Heart left ventricle (tissue), 16 donors: ENCODE measurements at regions of chr7 and their contacts with region 1.

Region 1: GRCh38 chr7:99985444-99985843 is 9.6 kb upstream of the AZGP1 start:
- DNase-seq: no peak
- ATAC-seq: no peak
- H3K4me3 ChIP-seq: no peak overlapping the region
- H3K27ac ChIP-seq: no peak overlapping the region
- H3K4me1 ChIP-seq: peaks cover 0 to 2% (median 0%) of the 10 kb centered on the region in 12 donors
- H3K27me3 ChIP-seq: peaks cover 0 to 4% (median 0%) of the 10 kb centered on the region in 9 donors
- CTCF ChIP-seq: no peak
- POLR2A ChIP-seq: no peak

Region 2: GRCh38 chr7:99918959-99919813 is 66.3 kb before region 1 on chr7 and contains the start of gene TRIM4:
- intact Hi-C with region 1: loop called in 3 of 10 experiments (anchors 5 kb)
- DNase-seq: peak; percentile 92 to 95 (median 95)
- ATAC-seq: peak; percentile 99 to 100 (median 99)
- H3K4me3 ChIP-seq: peak within 1 kb of the TSS; percentile 57 to 97 (median 81)
- H3K27ac ChIP-seq: peak within 1 kb of the TSS; percentile 51 to 97 (median 92)
- H3K4me1 ChIP-seq: peaks cover 9 to 42% (median 31%) of the 10 kb centered on the region in 12 donors
- H3K27me3 ChIP-seq: no peaks in the 10 kb centered on the region
- CTCF ChIP-seq: peak in 5 of 12 donors; percentile 13 to 45 (median 41)
- POLR2A ChIP-seq: peak in 1 of 2 donors; percentile 88
- total RNA-seq, gene TRIM4: 4.7 to 13.5 (median 7.3) TPM

Region 3: DNA sequence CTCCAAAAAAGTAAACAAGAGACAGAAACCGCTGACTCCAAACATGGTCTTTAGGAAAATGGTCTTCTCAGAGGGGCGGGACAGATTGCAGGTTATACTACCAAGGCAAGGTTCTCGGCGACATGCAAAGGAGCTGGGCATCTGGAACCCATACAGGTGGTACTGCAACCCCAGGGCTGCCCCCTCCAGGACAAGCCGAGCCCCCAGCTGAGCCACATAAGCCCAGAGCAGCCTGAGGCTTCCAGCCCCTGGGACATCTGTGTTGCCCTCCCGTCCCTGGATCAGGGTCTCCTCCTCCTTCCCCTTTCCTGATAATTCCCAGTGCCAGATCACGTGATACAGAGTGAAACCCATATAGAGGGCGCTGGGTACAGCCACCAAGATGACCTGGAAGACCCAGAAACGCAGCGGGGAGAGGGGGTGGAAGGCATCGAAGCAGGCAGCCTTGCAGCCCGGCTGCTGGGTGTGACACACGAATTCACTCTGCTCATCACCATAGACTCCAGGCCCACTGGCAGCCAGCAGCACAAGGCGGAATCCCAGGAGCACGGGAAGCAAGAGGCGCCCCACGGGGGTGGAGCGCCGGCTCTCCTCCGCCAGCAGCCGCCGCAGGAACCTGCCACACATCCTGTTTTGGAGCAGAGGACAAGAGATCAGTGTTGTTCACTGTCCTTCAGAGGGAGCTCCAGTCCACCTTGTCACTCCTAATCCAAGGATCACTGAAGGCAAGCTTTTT is 56.3 kb before region 1 on chr7 and contains the start of gene GJC3:
- intact Hi-C with region 1: loop called in 6 of 10 experiments (anchors 5 kb)
- DNase-seq: peak; percentile 71 to 80 (median 75)
- ATAC-seq: peak; percentile 83 to 98 (median 97)
- H3K4me3 ChIP-seq: peak within 1 kb of the TSS in 11 of 12 donors; percentile 12 to 48 (median 39)
- H3K27ac ChIP-seq: peak within 1 kb of the TSS; percentile 37 to 79 (median 62)
- H3K4me1 ChIP-seq: peaks cover 0 to 15% (median 10%) of the 10 kb centered on the region in 12 donors
- H3K27me3 ChIP-seq: peaks cover 0 to 3% (median 0%) of the 10 kb centered on the region in 9 donors
- CTCF ChIP-seq: peak; percentile 23 to 71 (median 53)
- POLR2A ChIP-seq: peak in 1 of 2 donors; percentile 22
- total RNA-seq, gene GJC3: 0.54 TPM in 1 of 9 donors, not detected in the others

Region 4: GRCh38 chr7:100044701-100045100 is 59.3 kb after region 1 on chr7:
- intact Hi-C with region 1: no loop called
- DNase-seq: no peak
- ATAC-seq: no peak
- H3K4me3 ChIP-seq: no peak overlapping the region
- H3K27ac ChIP-seq: no peak overlapping the region
- H3K4me1 ChIP-seq: peaks cover 0 to 8% (median 0%) of the 10 kb centered on the region in 12 donors
- H3K27me3 ChIP-seq: no peaks in the 10 kb centered on the region
- CTCF ChIP-seq: no peak
- POLR2A ChIP-seq: no peak